A549 (cell line): ENCODE measurements at regions of chr14 and their contacts with region 1.

Region 1: DNA sequence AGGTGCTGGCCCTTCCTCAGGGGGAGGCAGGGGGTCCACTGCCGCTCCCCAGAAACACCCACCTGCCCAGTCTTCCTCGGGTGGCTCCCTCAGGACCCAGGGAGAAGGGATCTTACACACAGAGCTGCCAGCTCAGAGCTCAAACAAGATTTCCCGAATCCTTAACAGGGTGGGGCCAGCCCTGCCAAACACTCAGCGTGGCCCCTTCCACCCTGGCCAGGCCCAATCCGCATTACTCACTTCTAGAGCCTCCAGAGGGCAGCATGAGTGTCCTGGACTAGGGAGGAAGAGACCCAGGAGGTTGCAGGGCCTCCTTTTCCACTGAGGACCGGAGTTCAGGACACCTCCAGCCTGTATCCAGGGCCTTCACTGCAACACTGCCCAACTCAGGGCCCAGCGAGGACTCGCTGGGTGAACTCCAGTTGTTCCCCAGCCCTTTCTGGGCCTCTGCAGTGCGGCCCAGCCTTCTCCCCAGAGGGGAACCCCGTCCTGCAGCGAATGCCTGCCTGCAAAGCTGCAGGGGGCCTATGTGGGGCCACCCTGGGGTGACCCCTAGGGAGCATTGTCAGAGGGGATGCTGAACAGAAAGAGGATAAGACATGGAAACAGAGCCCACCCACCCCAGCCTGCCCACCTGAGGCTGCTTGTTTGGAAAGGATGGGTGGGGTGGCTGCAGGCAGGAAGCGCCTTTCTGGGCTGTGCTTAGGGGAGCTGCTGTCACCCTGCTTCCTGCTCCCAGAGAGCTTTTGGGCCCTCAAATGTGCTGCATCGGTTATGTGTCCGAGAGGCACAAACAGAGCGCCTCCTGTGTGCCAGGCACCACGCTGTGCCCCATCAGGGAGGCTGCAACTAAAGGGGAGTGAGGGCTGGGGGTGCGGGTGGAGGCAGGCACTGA is 43.8 kb downstream of the CCNK start:
- DNase-seq: peak; percentile 62 to 64
- ATAC-seq: peak; percentile 62 to 81
- H3K4me3 ChIP-seq: no peak overlapping the region
- H3K27ac ChIP-seq: peak overlapping the region; percentile 62 to 90; a peak in 5 of 6 replicates
- H3K4me1 ChIP-seq: peaks cover 57% of the 10 kb centered on the region
- CTCF ChIP-seq: peak; percentile 55
- EP300 ChIP-seq: no peak
- POLR2A ChIP-seq: no peak
- RAD21 ChIP-seq: peak; percentile 61 to 65

Region 2: DNA sequence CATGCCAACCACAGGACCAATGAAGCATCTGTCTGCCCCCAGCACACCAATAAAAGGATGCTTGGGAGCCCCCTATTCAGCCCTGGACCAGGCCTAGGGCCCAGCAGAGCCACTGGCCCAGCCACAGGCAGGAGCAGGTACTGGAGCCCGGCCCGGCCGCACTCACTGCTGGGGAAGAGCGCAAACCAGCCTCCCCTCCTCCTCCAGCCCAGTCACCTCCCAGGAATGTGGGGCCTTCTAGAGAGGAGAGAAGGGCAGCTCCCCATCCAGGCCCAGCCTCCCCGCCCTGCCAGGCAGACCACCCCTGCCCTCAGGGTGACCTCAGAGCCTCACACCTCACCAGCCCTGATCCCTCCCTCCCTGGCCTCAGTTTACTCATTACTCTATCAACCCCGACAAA is 12.3 kb after region 1 on chr14:
- CTCF ChIA-PET with region 1: interaction called, 67 read pairs
- POLR2A ChIA-PET with region 1: no interaction called
- DNase-seq: peak; percentile 48 to 74
- ATAC-seq: peak; percentile 84 to 90
- H3K4me3 ChIP-seq: no peak overlapping the region
- H3K27ac ChIP-seq: peak overlapping the region; percentile 69 to 92
- H3K4me1 ChIP-seq: peaks cover 58% of the 10 kb centered on the region
- CTCF ChIP-seq: no peak
- EP300 ChIP-seq: no peak
- POLR2A ChIP-seq: no peak
- RAD21 ChIP-seq: no peak

Region 3: GRCh38 chr14:99554184-99554583 is 29.1 kb after region 1 on chr14:
- CTCF ChIA-PET with region 1: interaction called, 10 read pairs
- POLR2A ChIA-PET with region 1: no interaction called
- DNase-seq: no peak
- ATAC-seq: peak in 1 of 2 experiments; percentile 48; a peak in 3 of 6 replicates
- H3K4me3 ChIP-seq: no peak overlapping the region
- H3K27ac ChIP-seq: peak overlapping the region; percentile 44 to 60; a peak in 4 of 6 replicates
- H3K4me1 ChIP-seq: peaks cover 40% of the 10 kb centered on the region
- CTCF ChIP-seq: no peak
- EP300 ChIP-seq: no peak
- POLR2A ChIP-seq: no peak
- RAD21 ChIP-seq: no peak

Region 4: GRCh38 chr14:99563233-99564129 is 38.4 kb after region 1 on chr14:
- CTCF ChIA-PET with region 1: interaction called, 15 read pairs
- POLR2A ChIA-PET with region 1: no interaction called
- DNase-seq: peak; percentile 76 to 86
- ATAC-seq: peak; percentile 93 to 98
- H3K4me3 ChIP-seq: no peak overlapping the region
- H3K27ac ChIP-seq: peak overlapping the region; percentile 37 to 92; a peak in 4 of 6 replicates
- H3K4me1 ChIP-seq: peaks cover 72% of the 10 kb centered on the region
- CTCF ChIP-seq: peak; percentile 67
- EP300 ChIP-seq: no peak
- POLR2A ChIP-seq: no peak
- RAD21 ChIP-seq: peak; percentile 74 to 81

Region 5: DNA sequence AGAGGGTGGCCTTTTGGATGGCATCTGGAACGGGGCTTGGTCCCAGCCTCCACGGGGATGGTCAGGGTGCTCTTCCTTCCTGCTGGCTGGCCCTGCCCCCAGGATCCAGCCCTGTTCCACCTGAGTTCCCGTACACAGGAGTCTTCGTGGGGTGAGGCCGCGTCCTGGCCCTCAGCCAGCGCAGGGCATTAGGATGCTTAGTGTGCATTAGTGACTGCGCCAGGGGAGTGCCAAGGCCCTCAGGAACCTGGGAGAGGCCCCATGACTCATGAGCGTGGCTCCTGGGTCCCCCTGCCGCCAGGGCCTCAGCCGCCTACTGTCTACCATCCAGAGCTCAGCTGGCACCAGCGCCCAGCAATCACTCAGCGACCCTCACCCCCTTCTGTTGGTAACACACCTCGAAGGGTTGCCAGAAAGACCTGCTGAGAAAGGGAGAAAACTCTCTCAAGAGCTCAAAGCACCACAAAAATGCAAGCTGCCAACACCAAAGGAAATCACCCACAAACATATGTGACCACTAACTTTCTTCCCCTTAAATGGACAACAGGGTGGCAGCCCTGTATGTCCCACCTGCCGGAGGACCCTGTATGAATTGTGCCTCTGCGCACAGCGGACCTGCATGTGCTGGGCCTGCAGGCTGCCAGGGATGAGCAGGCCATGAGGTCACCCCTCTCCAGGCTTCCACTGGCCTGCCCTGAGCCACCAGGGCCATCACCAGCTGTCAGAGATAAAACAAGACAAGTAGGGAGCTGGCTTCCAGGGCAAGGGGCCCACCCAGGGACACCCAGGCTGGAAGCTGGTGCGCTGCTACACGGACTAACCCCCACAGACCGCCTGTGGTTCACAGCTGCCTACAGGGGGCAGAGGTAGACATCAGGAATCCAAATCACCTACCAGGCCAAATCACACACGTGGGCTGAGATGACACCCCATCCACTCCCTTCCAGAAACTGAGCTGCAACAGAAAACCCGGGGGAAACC is 50.3 kb after region 1 on chr14:
- CTCF ChIA-PET with region 1: interaction called, 32 read pairs
- POLR2A ChIA-PET with region 1: no interaction called
- DNase-seq: peak; percentile 58 to 81
- ATAC-seq: peak; percentile 51 to 65
- H3K4me3 ChIP-seq: peak overlapping the region; percentile 21
- H3K27ac ChIP-seq: peak overlapping the region; percentile 78 to 92
- H3K4me1 ChIP-seq: peaks cover 100% of the 10 kb centered on the region
- CTCF ChIP-seq: peak; percentile 39; the same call in 2 of the 3 replicates
- EP300 ChIP-seq: peak in 1 of 2 experiments; percentile 45; a peak in 1 of 5 replicates
- POLR2A ChIP-seq: no peak
- RAD21 ChIP-seq: peak in 1 of 2 experiments; percentile 37; a peak in 1 of 5 replicates

Region 6: GRCh38 chr14:99628832-99629618 is 104.0 kb after region 1 on chr14:
- CTCF ChIA-PET with region 1: interaction called, 105 read pairs
- POLR2A ChIA-PET with region 1: no interaction called
- DNase-seq: peak; percentile 80 to 89
- ATAC-seq: peak; percentile 91 to 97
- H3K4me3 ChIP-seq: no peak overlapping the region
- H3K27ac ChIP-seq: peak overlapping the region in 1 of 2 experiments; percentile 64; a peak in 2 of 6 replicates
- H3K4me1 ChIP-seq: 0 out of 3 replicates have a peak, but pooled peaks cover 3% of the 10 kb centered on the region
- CTCF ChIP-seq: peak; percentile 96
- EP300 ChIP-seq: no peak
- POLR2A ChIP-seq: no peak
- RAD21 ChIP-seq: peak; percentile 96 to 98

Region 7: DNA sequence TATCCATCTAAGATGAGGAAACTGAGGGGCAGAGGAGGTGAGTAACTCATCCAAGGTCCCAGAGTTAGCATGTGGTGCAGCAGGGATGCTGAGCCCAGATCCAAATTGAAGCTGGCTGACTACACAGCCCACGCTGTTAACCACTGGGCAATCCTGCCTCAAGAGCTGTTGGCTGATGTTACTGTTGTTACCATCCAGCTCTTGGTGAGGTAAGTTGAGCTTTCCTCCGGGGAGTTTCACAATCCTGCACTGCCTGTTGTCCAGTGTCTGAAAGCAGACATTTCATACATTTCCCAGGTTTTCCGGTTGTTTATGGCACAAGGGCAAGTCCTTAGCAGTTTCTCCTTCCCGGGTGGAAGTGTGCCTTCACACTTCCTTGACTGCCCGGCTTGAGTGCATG is 173.6 kb after region 1 on chr14:
- CTCF ChIA-PET with region 1: no interaction called
- POLR2A ChIA-PET with region 1: no interaction called
- DNase-seq: no peak
- ATAC-seq: no peak
- H3K4me3 ChIP-seq: no peak overlapping the region
- H3K27ac ChIP-seq: no peak overlapping the region
- H3K4me1 ChIP-seq: no peaks in the 10 kb centered on the region
- CTCF ChIP-seq: no peak
- EP300 ChIP-seq: no peak
- POLR2A ChIP-seq: no peak
- RAD21 ChIP-seq: no peak